Activated naive CD4-positive, alpha-beta T cell treated with anti-CD3 and anti-CD28 coated beads for 36 hours (primary cell): ENCODE measurements at regions of chr1 and their contacts with region 1.

Region 1: DNA sequence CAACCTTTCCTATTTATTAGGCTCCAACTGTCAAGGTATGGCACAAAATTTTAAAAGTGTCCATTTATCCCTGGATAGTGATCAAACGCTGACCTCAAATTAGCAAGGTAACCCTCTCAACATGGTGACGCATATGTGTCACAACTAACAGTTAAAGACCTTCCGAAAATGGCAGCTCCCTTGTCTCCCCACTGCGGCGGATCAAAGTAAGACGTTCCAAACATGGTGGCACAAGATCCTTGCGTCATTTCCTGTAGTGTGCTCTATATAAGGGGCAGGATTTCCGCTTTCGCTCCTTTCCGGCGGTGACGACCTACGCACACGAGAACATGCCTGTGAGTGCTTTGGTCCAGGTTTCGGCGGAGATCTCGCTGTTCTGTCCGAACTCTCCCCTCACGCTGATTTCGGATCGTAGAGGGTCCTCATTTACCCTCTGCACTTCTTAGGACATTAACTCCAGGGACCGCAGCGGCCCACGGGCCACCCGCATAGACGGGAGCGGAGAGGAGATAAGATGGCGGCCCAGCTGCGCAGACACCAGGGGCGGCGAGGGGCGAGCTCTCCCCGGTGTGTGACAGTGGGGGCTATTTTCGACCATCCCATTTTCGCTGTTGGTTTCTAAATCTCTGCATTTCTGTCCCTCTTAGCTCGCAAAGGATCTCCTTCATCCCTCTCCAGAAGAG is at the start of gene RPS27:
- DNase-seq: peak; percentile 93
- H3K4me3 Mint-ChIP-seq: peak within 1 kb of the TSS; percentile 93
- H3K27ac Mint-ChIP-seq: peak within 1 kb of the TSS; percentile 97
- H3K4me1 Mint-ChIP-seq: peaks cover 47% of the 10 kb centered on the region
- H3K27me3 Mint-ChIP-seq: peaks cover 3% of the 10 kb centered on the region
- total RNA-seq, gene RPS27: 2,339 to 2,449 TPM

Region 2: GRCh38 chr1:153150846-153151245 is 839.8 kb before region 1 on chr1 and contains the start of gene SPRR2G:
- CTCF ChIA-PET with region 1: no interaction called
- intact Hi-C with region 1: no loop called
- DNase-seq: no peak
- H3K4me3 Mint-ChIP-seq: no peak within 1 kb of the TSS
- H3K27ac Mint-ChIP-seq: no peak within 1 kb of the TSS
- H3K4me1 Mint-ChIP-seq: no peaks in the 10 kb centered on the region
- H3K27me3 Mint-ChIP-seq: peaks cover 9% of the 10 kb centered on the region
- total RNA-seq, gene SPRR2G: not detected

Region 3: DNA sequence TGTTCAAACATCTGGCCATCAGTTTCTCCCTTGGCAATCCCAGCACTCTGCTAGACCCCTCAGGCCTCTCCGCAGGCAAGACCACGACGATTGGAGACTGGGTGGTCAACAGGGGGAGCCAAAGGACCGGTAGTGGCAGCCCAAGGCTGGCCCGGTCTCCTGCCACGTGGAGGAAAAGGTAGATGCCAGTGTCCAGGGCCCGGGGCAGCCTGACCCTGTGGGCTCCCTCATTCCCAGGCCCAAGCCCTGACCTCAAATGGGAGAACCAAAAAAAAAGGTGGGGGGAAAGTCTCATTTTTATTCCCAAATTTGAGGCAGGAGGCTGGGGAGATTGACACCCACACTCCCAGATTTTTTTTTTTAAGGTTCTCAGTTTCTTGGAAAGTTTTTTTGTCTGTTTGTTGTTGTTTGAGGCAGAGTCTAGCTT is 479.6 kb before region 1 on chr1:
- CTCF ChIA-PET with region 1: interaction called, 3 read pairs
- intact Hi-C with region 1: loop called (anchors 1 kb)
- DNase-seq: peak; percentile 90
- H3K4me3 Mint-ChIP-seq: no peak overlapping the region
- H3K27ac Mint-ChIP-seq: peak overlapping the region; percentile 36
- H3K4me1 Mint-ChIP-seq: peaks cover 8% of the 10 kb centered on the region
- H3K27me3 Mint-ChIP-seq: no peaks in the 10 kb centered on the region

Region 4: GRCh38 chr1:153727463-153728304 is 262.9 kb before region 1 on chr1 and contains the start of gene INTS3:
- CTCF ChIA-PET with region 1: interaction called, 3 read pairs
- intact Hi-C with region 1: loop called (anchors 5 kb)
- DNase-seq: peak; percentile 100
- H3K4me3 Mint-ChIP-seq: peak within 1 kb of the TSS; percentile 97
- H3K27ac Mint-ChIP-seq: peak within 1 kb of the TSS; percentile 95
- H3K4me1 Mint-ChIP-seq: peaks cover 39% of the 10 kb centered on the region
- H3K27me3 Mint-ChIP-seq: no peaks in the 10 kb centered on the region
- total RNA-seq, gene INTS3: 39.3 to 40.4 TPM

Region 5: DNA sequence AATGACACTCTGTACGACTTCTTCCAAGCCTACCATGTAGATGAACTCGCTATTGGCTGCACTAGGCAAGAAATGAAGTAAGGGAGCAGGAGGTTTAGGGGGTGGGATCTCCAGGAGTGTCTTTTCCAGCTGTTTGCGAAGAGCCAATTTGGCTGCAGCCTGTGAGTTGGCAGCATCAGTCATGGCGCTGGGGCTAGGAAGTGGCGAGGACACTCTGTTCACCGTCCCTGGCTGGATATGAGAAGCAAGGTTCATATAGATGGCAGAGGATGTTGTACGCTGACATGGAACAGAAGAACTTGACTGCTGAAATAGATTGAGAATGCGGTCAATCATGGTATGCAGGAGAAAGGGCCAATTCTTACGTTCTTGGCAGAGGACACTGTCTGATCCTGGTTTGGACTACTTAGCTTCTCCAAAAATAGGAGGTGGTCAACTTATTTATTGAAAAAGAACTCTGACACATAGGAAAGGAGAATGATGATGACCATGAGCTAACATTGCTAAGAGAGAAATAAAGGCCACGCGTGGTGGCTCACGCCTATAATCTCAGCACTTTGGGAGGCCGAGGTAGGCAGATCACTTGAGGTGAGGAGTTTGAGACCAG is 174.2 kb before region 1 on chr1:
- CTCF ChIA-PET with region 1: interaction called, 4 read pairs
- intact Hi-C with region 1: loop called (anchors 1 kb)
- DNase-seq: no peak
- H3K4me3 Mint-ChIP-seq: no peak overlapping the region
- H3K27ac Mint-ChIP-seq: no peak overlapping the region
- H3K4me1 Mint-ChIP-seq: no peaks in the 10 kb centered on the region
- H3K27me3 Mint-ChIP-seq: no peaks in the 10 kb centered on the region

Region 6: DNA sequence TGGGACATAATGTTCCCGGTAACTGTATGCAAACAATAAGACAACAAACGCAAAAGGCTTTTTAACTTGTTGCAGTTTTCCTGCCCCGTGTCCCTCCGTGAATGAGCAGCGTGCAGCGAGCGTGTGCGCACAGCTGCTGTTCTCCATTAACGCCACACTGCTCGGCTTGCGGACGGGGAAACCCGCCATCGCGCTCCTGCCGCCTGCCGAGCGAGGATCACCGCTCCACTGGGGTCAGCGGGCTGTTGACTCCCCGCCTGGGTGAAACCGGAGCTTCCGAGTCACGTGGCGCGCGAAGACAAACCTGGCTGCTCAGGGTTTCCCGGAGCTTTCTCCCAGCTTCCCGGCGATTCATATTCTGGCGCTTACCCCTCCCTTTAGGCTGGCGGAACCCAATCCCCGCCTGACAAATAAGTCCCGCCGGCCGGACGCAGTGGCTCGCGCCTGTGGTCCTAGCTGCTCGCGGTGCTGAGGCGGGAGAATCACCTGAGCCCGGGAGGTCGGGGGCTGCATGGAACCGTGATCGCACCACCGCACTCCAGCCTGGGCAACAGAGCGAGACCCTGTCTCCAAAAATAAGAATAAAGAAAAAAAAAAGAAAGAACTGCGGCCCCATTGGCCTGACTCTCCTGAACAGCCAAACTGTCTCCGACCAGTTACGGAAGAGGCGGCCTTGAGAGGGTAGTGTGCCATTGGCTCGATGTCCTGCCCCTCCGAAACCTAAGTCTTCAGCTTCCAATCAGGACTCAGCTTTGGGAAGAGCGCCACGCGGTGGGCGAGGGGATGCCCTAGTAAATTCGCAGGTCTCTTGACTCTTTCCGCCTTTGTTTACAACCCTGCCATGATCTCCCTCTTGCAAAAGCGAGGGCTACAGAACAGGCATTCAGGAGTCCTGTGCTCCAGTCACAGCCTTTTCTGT is 23.3 kb before region 1 on chr1 and contains the start of gene CREB3L4:
- CTCF ChIA-PET with region 1: interaction called, 32 read pairs
- intact Hi-C with region 1: loop called (anchors 1 kb)
- DNase-seq: peak; percentile 90
- H3K4me3 Mint-ChIP-seq: peak within 1 kb of the TSS; percentile 85
- H3K27ac Mint-ChIP-seq: peak within 1 kb of the TSS; percentile 94
- H3K4me1 Mint-ChIP-seq: peaks cover 42% of the 10 kb centered on the region
- H3K27me3 Mint-ChIP-seq: no peaks in the 10 kb centered on the region
- total RNA-seq, gene CREB3L4: 5.6 to 7.4 TPM

Region 7: DNA sequence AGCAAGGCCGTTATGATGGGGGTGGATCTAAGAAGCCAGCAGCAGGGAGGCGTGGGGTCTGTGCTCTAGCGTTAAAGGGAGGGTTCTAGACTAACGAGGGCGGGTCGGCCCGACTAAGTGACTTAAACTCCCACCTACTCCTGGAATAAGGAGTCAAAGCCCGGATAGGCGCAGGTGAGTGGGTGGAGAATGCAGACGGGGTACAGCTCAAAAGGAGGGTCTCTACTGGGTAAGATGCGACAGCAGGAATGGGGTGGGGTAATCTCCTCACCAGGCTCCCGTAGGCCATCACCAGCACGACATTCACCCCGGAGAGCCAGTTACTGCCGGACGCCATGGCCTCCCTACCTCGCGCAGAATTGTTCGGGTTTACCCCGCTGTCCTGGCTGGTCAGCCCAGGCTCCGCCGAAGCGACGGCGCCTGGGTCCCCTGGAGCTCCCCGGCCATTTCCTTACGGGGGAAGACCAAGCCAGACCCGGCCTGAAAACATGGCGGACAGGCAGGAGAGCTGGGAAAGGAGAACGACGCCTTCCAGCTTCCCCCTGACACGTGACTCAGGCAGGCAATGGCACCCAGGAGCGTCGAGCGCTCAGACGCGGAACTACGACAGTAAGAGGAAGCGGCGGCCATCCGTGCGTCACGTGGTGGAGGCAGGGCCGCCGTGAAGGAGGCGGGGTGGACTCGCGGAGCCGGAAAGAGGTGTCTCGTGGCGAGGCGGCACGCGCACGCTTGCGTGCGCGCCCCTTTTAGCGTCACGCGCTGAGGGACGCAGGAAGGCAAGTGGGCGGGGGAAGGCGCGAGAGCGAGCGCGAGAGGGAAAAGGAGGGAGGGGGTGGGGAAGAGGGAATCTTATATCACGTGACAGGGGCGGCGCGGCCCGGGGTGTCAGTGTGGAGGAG is 229.7 kb after region 1 on chr1 and contains the start of gene UBAP2L:
- CTCF ChIA-PET with region 1: no interaction called
- intact Hi-C with region 1: loop called (anchors 1 kb)
- DNase-seq: peak; percentile 99
- H3K4me3 Mint-ChIP-seq: peak within 1 kb of the TSS; percentile 96
- H3K27ac Mint-ChIP-seq: peak within 1 kb of the TSS; percentile 98
- H3K4me1 Mint-ChIP-seq: peaks cover 72% of the 10 kb centered on the region
- H3K27me3 Mint-ChIP-seq: no peaks in the 10 kb centered on the region
- total RNA-seq, gene UBAP2L: 154 to 164 TPM